Dendritic cell treated with granulocyte-macrophage colony-stimulating factor and Interleukin-4, amounts not matched to agents 40 ng/mL and 50 ng/mL, for 4 days (primary cell): ENCODE measurements at regions of chr10 and their contacts with region 1.

Region 1: DNA sequence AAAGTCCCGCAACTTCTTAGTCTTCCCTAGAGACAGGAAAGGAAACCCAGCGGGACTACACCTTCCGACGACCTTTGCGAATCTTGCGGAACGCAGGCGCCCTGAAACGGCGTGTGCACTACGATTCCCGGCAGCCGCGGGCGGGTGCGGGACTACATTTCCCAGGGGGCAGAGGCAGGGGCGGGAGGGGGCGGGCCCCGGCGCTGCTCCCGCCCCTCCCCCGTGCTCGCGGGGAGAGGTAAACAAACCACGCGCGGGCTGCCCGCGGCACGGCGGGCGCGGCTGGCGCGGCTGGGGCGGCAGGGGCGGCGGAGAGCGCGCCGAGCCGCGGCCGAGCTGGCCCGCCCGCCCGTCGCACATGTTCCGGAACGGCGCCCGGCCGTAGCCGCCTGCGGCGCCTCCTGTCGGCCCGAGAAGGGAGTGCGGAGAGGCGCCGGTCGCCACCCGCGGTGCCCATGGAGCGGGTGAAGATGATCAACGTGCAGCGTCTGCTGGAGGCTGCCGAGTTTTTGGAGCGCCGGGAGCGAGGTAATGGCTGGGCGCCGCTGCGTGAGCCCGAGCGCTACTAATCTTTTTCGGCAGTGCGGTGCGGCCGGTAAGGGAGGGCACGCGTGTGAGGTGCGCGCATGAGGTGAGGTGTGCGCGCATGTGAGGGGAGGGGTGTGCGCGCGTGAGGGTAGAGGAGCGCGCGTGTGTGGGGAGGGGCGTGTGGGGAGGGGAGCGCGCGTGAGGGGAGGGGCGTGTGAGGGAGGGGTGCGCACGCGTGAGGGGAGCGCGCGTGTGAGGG is 18.5 kb downstream of the MXI1 start:
- H3K4me3 Mint-ChIP-seq: peak overlapping the region; percentile 97
- H3K27ac Mint-ChIP-seq: peak overlapping the region; percentile 93
- H3K4me1 Mint-ChIP-seq: peaks cover 55% of the 10 kb centered on the region
- H3K27me3 Mint-ChIP-seq: no peaks in the 10 kb centered on the region

Region 2: GRCh38 chr10:109726473-109726872 is 499.5 kb before region 1 on chr10:
- intact Hi-C with region 1: no loop called
- H3K4me3 Mint-ChIP-seq: no peak overlapping the region
- H3K27ac Mint-ChIP-seq: no peak overlapping the region
- H3K4me1 Mint-ChIP-seq: no peaks in the 10 kb centered on the region
- H3K27me3 Mint-ChIP-seq: no peaks in the 10 kb centered on the region

Region 3: DNA sequence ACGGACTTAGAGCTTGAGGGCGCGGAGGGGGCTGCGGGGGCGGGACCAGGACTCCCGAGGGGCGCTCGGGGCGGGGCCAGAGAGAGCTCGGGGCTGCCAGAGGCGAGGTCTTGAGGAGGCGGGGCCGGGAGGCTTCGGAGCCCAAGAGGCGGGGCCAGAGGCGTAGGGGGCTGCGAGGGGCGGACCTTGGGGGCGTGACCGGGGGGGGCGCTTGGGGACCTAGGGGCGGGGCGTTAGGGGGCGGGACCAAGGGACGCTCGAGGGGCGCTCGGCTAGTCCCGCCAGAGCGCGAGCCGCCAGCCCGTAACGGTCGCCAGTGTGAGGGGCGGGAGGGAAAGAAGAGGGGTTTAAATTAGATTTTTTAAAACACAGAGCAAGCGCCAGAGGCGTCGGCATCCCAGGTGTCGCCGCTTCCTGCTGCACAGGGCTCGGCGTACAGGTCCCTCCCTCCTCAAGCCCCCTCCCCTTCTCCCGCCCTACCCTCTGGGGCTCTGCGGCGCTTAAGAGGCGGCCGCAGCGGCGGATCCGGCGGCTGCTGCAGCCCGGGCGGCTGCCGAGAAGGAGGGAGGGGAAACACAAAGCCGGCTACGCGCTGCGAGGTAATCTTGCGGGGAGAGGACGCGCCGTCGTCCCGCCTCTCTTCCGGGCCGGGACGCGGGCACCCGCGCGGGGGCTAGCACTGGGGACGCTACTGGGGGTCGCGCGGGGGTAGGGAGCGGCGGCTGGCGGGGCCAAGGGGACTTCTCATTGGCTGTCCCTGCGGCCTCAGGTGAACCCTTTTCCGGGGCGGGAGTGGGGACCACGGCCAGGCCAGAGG is 218.0 kb before region 1 on chr10 and contains the start of gene ADD3:
- intact Hi-C with region 1: loop called (anchors 5 kb)
- H3K4me3 Mint-ChIP-seq: peak within 1 kb of the TSS; percentile 97
- H3K27ac Mint-ChIP-seq: no peak within 1 kb of the TSS
- H3K4me1 Mint-ChIP-seq: peaks cover 32% of the 10 kb centered on the region
- H3K27me3 Mint-ChIP-seq: no peaks in the 10 kb centered on the region

Region 4: GRCh38 chr10:110210674-110211464 is 15.1 kb before region 1 on chr10:
- intact Hi-C with region 1: loop called (anchors 1 kb)
- H3K4me3 Mint-ChIP-seq: peak overlapping the region; percentile 95
- H3K27ac Mint-ChIP-seq: peak overlapping the region; percentile 92
- H3K4me1 Mint-ChIP-seq: peaks cover 69% of the 10 kb centered on the region
- H3K27me3 Mint-ChIP-seq: peaks cover 13% of the 10 kb centered on the region

Region 5: DNA sequence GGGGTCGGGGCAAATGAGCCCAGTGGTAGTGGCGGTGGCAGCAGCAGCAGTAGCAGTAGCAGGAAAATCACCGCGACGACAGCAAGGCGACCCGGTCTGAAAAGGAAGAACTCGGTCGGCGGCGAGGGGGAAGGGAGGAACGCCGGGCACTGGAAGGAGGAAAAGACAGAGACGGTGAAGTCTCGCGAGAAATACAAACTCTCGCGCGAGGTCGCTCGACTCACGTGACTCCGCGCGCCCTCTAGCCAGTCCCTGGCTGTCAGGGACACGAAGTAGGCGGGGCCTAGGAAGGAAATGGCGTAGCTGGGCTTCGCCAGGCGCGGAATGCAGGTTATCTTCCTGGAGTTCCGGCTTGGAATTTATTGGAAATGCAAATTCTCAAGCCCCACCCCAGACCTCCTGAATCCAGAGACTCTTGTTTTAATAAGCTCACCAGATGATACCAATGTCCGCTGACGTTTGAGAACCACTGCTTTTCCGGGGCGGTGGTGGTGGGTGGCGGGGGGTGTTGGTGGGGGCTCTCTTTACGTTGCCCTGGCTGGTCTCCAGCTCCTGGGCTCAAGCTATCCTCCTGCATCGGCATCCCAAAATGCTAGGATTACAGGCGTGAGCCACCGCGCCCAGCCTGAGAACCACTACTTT is 79.0 kb after region 1 on chr10 and contains the start of gene SMNDC1:
- intact Hi-C with region 1: loop called (anchors 2 kb)
- H3K4me3 Mint-ChIP-seq: peak within 1 kb of the TSS; percentile 80
- H3K27ac Mint-ChIP-seq: peak within 1 kb of the TSS; percentile 81
- H3K4me1 Mint-ChIP-seq: peaks cover 32% of the 10 kb centered on the region
- H3K27me3 Mint-ChIP-seq: no peaks in the 10 kb centered on the region

Region 6: DNA sequence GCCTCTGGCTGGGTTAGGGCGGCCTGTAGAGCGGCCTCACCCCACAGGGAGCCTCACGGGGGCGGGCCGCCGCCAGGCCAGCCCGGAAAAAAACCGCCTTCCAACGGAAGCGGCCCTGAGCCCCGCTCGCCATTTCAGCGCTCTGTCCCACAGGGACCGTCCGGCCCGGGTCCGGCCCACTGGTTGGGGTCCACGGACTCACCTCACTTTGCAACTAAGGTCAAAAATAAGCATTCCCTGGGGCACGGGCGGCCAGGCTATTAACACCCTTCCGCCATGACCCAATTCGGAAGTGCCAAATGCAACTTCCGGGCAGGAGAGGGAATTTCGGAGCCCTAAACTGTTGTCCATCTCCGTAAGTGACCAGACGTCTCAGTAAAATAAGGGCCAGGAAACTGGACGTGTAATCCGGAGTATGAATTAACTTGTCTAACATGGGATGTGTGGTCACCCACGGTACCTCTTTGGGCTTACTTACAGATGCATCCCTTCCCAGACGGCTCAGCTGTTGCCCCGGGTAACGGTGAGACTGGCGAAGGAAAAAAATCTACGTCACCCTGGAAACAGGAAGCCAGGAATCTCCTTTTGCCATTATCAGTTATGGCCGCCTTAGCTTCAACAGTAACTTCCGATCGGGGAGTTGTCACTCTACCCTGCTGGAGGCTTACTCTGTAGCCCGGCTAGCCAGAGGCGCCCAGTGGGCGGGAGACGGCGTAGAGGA is 692.9 kb after region 1 on chr10 and contains the start of gene BBIP1:
- intact Hi-C with region 1: loop called (anchors 2 kb)
- H3K4me3 Mint-ChIP-seq: peak within 1 kb of the TSS; percentile 97
- H3K27ac Mint-ChIP-seq: peak within 1 kb of the TSS; percentile 99
- H3K4me1 Mint-ChIP-seq: peaks cover 26% of the 10 kb centered on the region
- H3K27me3 Mint-ChIP-seq: no peaks in the 10 kb centered on the region